CD14-positive monocyte (primary cell): ENCODE measurements at regions of chr12 and their contacts with region 1.

Region 1: GRCh38 chr12:40208707-40209446 is 15.9 kb upstream of the LRRK2 start:
- DNase-seq: peak; percentile 85 to 95 (median 92)
- H3K4me3 ChIP-seq: peak overlapping the region in 2 of 3 experiments; percentile 41 to 69
- H3K4me3 Mint-ChIP-seq: peak overlapping the region; percentile 47 to 77
- H3K27ac ChIP-seq: peak overlapping the region; percentile 82 to 89
- H3K27ac Mint-ChIP-seq: peak overlapping the region; percentile 93 to 99 (median 96)
- H3K4me1 ChIP-seq: peaks cover 47 to 61% of the 10 kb centered on the region in 2 donors
- H3K4me1 Mint-ChIP-seq: peaks cover 39% of the 10 kb centered on the region
- H3K27me3 ChIP-seq: no peaks in the 10 kb centered on the region
- H3K27me3 Mint-ChIP-seq: no peaks in the 10 kb centered on the region
- CTCF ChIP-seq: no peak

Region 2: DNA sequence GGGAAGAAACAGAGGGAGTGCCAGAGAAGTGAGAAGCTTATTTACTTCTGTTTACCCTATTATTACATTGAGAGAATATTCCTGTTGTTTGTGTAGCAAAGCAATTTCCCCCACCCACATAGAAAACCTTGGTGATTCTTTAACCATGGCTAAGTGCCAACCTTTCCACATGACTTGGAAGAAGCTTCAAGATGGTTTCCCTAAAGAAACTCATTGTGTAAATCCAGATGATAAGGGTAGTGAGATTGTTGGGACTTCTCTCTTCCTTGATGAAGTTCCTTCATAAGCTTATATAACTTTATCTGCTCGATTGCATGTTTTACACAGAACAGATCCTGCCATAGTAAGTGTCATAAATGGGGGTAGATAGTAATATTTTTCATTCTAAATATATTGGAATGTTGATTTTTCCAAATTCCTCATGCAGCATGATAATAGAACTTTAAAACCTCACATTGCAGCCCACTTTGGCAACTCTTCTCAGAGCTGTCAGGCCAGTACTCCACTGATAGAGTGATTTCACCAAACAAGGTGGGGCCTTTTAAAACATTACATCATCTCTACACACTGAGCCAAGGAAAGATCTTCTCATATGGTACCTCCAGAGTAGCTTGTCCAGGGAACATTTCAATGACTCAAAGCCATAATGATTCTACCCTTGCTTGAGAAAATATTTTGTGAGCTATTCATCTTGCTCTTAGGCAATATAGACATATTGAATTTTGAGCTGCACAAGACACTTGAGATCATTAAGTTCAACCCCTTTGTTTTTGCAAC is 718.2 kb before region 1 on chr12:
- intact Hi-C with region 1: no loop called
- DNase-seq: no peak
- H3K4me3 ChIP-seq: no peak overlapping the region
- H3K4me3 Mint-ChIP-seq: no peak overlapping the region
- H3K27ac ChIP-seq: no peak overlapping the region
- H3K27ac Mint-ChIP-seq: no peak overlapping the region
- H3K4me1 ChIP-seq: no peaks in the 10 kb centered on the region
- H3K4me1 Mint-ChIP-seq: no peaks in the 10 kb centered on the region
- H3K27me3 ChIP-seq: no peaks in the 10 kb centered on the region
- H3K27me3 Mint-ChIP-seq: no peaks in the 10 kb centered on the region
- CTCF ChIP-seq: no peak

Region 3: DNA sequence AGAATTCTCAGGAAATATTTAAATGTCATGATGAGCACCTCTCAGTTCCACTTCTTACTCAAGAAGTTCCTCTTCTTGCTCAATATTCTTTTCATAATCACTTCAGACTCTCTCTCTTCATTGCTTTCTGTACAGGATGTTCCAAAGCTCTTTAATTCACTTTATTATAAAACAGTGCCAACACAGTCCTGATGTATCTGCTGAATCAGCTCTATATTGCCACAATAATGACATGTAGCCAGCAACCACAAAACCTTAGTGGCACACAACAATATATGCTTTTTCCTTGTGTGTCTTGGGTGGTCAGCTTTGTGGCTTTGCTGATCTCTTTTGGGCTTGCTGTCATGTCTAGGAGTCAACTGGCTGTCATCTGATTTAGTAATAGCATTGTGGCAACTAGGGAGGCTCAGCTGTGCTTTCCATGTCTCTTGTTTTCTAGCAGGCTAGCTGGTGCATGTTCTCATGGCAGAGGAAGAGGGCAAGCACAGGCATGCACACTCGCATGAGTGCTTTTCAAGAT is 50.2 kb before region 1 on chr12:
- intact Hi-C with region 1: loop called in 1 of 2 experiments (anchors 5 kb)
- DNase-seq: peak; percentile 69 to 88 (median 83)
- H3K4me3 ChIP-seq: peak overlapping the region; percentile 15 to 66 (median 44)
- H3K4me3 Mint-ChIP-seq: peak overlapping the region; percentile 45 to 83
- H3K27ac ChIP-seq: peak overlapping the region; percentile 61 to 89
- H3K27ac Mint-ChIP-seq: peak overlapping the region; percentile 89 to 97 (median 96)
- H3K4me1 ChIP-seq: peaks cover 45 to 63% of the 10 kb centered on the region in 2 donors
- H3K4me1 Mint-ChIP-seq: peaks cover 44% of the 10 kb centered on the region
- H3K27me3 ChIP-seq: no peaks in the 10 kb centered on the region
- H3K27me3 Mint-ChIP-seq: no peaks in the 10 kb centered on the region
- CTCF ChIP-seq: no peak